Upper lobe of right lung (tissue), 1 donor: ENCODE measurements at regions of chr7 and their contacts with region 1.

Region 1: DNA sequence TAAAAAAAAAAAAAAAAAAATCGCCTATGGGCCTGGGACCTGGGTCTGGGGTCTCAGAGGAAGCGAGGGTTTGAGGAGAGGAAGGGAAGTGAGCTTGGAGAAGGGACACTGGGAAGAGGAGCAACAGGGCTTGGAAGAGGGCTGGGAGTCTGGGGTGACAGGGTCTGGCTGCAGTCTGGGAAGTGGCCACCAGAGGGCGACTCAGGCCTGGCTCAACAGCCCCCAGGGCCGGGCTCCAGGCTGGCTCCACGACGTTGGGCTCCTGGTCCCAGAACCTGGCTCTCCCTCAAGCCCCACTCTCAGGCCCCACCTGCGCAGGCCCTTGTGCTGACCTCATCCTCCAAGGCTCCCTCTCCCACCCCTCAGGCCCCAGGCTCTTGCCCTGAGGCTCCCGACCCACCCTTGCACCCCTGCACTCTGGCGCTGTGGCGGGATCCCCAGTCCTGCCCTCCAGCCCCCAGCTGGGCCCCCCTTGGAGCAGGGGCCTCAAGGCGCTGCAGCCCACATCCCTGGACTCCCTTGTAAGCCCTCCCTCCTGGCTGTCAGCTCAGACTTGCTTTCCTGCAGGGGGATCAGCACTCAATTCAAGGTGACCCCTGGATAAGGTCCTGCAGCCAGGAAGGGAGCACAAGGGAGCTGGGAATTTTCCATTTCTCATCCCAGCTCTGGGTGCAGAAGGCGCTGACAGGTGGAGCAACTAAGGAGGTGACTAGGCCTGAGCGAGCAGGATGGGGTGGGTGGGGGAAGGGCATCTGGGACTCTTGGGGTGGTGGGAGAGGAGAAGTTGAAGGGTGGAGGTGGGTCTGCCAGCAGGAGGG is 5.4 kb upstream of the SPACDR start:
- DNase-seq: peak; percentile 93
- ATAC-seq: peak; percentile 88
- H3K4me3 ChIP-seq: no peak overlapping the region
- H3K27ac ChIP-seq: no peak overlapping the region
- H3K4me1 ChIP-seq: peaks cover 35% of the 10 kb centered on the region
- H3K27me3 ChIP-seq: no peaks in the 10 kb centered on the region
- CTCF ChIP-seq: peak; percentile 92

Region 2: DNA sequence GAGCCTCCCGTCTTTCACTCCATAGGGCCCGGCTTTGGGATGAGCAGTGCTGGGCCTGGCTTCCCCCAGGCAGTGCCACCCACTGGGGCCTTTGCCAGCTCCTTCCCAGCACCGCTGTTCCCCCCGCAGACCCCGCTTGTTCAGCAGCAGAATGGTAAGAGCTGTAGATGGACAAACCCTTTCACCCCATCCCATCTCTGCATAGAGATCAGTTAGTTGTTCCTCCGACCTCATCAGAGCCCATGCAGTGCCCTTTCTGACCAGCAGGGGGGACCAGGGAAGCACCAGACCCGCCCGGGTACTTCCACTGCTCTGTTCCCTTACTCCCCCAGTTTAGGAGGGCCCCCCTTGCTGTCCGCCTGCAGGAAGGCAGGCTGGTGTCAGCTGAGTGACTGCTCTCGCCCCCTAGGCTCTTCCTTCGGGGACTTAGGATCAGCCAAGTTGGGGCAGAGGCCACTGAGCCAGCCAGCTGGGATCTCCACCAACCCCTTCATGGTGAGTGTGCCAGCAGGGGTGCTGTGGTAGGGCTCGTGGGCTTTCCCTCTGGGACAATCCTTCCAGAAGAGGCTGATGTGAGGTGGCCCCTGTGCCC is 94.5 kb after region 1 on chr7:
- intact Hi-C with region 1: loop called (anchors 5 kb)
- DNase-seq: peak; percentile 90
- ATAC-seq: peak; percentile 84
- H3K4me3 ChIP-seq: no peak overlapping the region
- H3K27ac ChIP-seq: no peak overlapping the region
- H3K4me1 ChIP-seq: peaks cover 4% of the 10 kb centered on the region
- H3K27me3 ChIP-seq: no peaks in the 10 kb centered on the region
- CTCF ChIP-seq: peak; percentile 98